ENCODE measurements at regions of chr16 and their contacts with region 1.

Region 1: DNA sequence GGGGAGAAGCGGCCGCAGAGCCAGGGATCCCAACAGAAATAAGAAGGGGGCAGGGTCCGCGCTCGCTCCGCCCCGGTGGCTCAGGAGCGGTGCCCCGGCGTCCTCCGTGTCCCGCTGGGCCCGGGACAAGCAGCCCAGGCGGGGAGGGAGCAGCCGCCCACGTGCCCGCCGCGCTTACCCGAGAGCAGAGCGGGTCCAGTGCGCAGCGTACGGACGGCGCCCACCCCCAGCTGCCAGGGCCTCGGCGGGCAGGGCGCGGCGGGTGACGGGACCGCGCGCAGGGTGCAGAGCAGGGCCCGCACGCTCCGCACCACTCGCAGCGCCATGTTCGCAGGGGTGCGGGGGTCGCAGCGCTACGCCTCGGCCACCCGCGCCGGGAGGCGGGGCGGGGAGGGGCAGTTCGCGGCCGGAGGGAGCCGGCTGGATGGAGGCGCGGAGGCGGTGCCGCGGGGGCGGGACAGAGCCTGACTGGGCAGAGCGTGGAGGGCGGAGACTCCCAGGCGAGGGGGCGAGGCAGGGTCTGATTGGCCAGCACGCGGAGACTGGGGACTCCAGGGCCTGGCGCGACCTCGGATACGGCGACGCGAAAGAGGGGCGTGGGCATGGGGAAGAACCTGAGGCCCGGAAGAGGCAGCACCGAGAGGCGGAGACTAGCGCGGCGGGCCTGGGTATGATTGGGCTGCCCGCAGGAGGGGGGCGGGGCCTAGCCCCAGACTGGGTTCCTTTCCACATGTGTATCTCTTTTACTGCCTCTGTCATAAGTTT is at the start of gene GCSH:
- DNase-seq: peak; percentile 99
- H3K4me3 ChIP-seq: peak within 1 kb of the TSS; percentile 88
- H3K27ac ChIP-seq: no peak within 1 kb of the TSS
- H3K4me1 ChIP-seq: peaks cover 23% of the 10 kb centered on the region
- CTCF ChIP-seq: no peak
- total RNA-seq, gene GCSH: 11.7 and 23.4 TPM in 2 replicates

Region 2: GRCh38 chr16:81117436-81117835 is 21.3 kb after region 1 on chr16:
- CTCF ChIA-PET with region 1: no interaction called
- POLR2A ChIA-PET with region 1: no interaction called
- intact Hi-C with region 1: no loop called
- DNase-seq: no peak
- H3K4me3 ChIP-seq: no peak overlapping the region
- H3K27ac ChIP-seq: no peak overlapping the region
- H3K4me1 ChIP-seq: peaks cover 10% of the 10 kb centered on the region
- CTCF ChIP-seq: no peak

Region 3: DNA sequence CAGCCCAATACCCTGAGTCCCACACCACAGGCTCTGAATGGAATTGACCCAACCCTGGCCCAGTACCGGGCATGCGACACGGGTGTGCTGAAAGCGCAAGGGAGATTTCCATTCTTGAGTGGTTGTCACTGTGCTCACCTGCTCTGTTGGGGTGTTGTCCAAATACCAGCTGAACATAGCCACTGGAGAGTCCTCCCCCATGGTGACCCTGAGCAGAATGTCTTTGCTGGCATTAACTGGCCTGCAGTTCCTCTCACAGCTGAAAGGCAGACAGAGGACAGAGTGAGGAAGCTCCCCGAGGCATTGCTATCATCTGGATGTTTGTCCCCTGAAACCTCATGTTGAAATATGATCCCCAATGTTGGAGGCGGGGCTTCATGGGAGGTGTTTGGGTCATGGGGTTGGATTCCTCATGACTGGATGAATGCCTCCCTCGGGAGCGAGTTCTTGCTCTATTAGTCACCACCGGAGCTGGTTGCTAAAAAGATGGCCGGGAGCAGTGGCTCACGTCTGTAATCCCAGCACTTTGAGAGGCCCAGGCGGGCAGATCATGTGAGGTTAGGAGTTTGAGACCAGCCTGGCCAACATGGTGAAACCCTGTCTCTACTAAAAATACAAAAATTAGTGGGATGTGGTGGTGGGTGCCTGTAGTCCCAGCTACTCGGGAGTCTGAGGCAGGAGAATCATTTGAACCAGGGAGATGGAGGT is 85.0 kb after region 1 on chr16:
- CTCF ChIA-PET with region 1: no interaction called
- POLR2A ChIA-PET with region 1: no interaction called
- intact Hi-C with region 1: no loop called
- DNase-seq: no peak
- H3K4me3 ChIP-seq: no peak overlapping the region
- H3K27ac ChIP-seq: no peak overlapping the region
- H3K4me1 ChIP-seq: no peaks in the 10 kb centered on the region
- CTCF ChIP-seq: no peak

Region 4: DNA sequence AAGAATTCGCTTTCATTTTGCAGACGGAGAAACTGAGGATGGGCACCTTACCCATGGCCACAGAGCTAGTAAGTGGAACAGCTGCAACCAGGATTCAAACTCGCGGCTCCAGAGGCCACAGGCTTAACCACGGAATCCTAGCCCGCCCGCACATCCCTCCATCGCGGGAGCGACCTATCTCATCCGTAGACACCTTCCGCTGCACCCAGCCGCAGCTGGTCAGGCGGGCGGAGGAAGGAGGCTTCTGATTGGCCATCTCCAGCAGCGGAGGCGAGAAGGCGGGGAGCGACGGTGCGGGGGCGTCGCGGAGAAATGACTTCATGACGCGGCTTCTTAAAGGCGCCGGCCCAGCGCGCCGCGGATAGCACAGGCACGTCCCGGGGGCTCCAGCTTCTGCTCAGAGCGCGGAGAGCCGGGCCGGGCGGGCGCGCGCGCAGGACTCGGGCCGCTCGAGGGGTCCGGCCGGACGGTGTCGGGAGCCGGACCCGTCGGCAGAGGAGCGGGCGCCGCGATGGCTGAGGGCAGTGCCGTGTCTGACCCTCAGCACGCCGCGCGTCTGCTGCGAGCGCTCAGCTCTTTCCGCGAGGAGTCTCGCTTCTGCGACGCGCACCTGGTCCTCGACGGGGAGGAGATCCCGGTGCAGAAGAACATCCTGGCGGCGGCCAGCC is 218.6 kb after region 1 on chr16 and contains the start of gene GAN:
- CTCF ChIA-PET with region 1: no interaction called
- POLR2A ChIA-PET with region 1: no interaction called
- intact Hi-C with region 1: loop called (anchors 10 kb)
- DNase-seq: peak; percentile 96
- H3K4me3 ChIP-seq: peak within 1 kb of the TSS; percentile 94
- H3K27ac ChIP-seq: no peak within 1 kb of the TSS
- H3K4me1 ChIP-seq: peaks cover 13% of the 10 kb centered on the region
- CTCF ChIP-seq: no peak
- total RNA-seq, gene GAN: 5.1 and 6.2 TPM in 2 replicates